ENCODE measurements at regions of chr20 and their contacts with region 1.

Region 1: GRCh38 chr20:9903048-9903655 is 64.3 kb upstream of the PAK5 start:
- DNase-seq: no peak
- ATAC-seq: no peak
- H3K4me3 ChIP-seq: no peak overlapping the region
- H3K4me1 ChIP-seq: no peaks in the 10 kb centered on the region
- CTCF ChIP-seq: no peak

Region 2: GRCh38 chr20:9756660-9757059 is 146.5 kb before region 1 on chr20:
- intact Hi-C with region 1: loop called in 1 of 2 experiments (anchors 2 kb)
- DNase-seq: no peak
- ATAC-seq: no peak
- H3K4me3 ChIP-seq: no peak overlapping the region
- H3K4me1 ChIP-seq: no peaks in the 10 kb centered on the region
- CTCF ChIP-seq: no peak

Measured in mucosa of descending colon (tissue), 3 donors.